ENCODE measurements at regions of chr2 and their contacts with region 1.

Region 1: DNA sequence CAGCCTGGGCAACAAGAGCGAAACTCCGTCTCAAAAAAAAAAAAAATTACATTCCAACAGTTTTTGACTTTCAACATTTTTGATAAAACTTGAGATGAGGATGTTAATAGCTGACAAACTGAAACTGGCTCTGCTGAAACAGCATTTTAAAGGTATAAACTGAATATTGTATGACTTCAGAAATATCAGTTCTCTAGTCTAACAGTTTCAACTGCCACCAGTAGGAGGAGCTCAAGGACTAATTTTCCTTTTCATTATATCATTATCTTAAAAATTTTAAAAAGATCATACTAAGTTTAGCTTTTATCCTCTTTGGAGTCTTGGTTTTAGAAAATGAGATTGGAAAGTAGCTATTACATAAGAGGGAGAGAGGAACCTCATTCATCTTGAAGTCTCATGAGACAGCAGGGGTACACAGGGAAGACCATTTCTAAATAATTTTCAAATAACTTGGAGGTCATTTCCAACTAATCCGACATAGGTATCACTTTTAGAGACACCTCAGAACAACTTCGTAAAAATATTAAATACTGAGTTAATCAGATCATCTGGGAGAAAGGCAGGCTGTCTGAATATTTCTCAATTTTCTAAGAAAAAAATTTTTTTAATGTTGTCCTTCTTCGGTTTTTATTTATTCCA is 37.6 kb upstream of the MCM6 start:
- DNase-seq: peak; percentile 60
- H3K4me3 Mint-ChIP-seq: no peak overlapping the region
- H3K27ac Mint-ChIP-seq: no peak overlapping the region
- H3K4me1 Mint-ChIP-seq: no peaks in the 10 kb centered on the region
- H3K27me3 Mint-ChIP-seq: no peaks in the 10 kb centered on the region
- CTCF ChIP-seq: peak; percentile 76

Region 2: GRCh38 chr2:135931776-135932443 is 18.1 kb after region 1 on chr2:
- CTCF ChIA-PET with region 1: interaction called, 16 read pairs
- POLR2A ChIA-PET with region 1: interaction called, 4 read pairs
- intact Hi-C with region 1: no loop called
- DNase-seq: no peak
- H3K4me3 Mint-ChIP-seq: no peak overlapping the region
- H3K27ac Mint-ChIP-seq: no peak overlapping the region
- H3K4me1 Mint-ChIP-seq: no peaks in the 10 kb centered on the region
- H3K27me3 Mint-ChIP-seq: no peaks in the 10 kb centered on the region
- CTCF ChIP-seq: no peak

Region 3: DNA sequence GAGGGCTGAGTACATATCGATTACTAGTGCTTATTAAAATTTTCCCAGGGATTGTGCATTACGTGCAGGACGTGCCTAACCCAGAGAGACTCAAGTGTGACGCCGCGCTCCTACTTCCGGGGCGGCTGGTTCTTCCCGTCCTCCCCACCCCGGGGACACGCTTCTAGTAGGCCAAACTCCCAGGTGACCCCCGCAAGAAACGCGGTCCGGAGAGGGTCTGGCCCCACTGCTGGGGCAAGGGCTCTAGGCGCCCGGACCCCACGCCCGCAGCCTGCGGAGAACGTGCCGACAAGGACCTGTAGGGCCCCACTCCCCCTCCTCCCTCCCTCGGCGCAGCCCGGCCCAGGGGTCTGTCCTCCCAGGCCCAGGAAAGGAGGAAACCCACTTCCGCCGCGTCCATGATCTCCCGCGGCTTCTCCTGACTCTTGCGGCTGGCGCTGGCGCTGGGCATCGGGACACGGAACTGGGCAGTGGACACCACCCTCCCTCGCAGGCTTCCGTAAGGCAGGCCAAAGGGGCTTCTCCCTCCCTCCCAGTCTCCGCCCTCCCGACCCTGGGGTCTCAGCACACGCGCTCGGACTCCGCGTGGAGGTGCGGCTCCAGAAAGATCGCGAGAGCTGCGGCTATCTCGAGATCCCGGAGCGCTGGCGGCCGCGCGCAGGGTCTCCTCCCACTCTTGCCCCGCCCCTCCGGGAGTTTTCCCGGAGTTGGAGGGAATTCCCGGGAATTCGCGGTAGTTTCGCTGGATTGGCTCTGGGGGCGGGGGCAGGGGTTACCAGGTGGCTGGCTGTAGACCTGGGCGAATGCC is 71.4 kb after region 1 on chr2 and contains the start of gene DARS1:
- CTCF ChIA-PET with region 1: interaction called, 4 read pairs
- POLR2A ChIA-PET with region 1: interaction called, 4 read pairs
- intact Hi-C with region 1: loop called (anchors 2 kb)
- DNase-seq: peak; percentile 91
- H3K4me3 Mint-ChIP-seq: peak within 1 kb of the TSS; percentile 91
- H3K27ac Mint-ChIP-seq: peak within 1 kb of the TSS; percentile 98
- H3K4me1 Mint-ChIP-seq: peaks cover 6% of the 10 kb centered on the region
- H3K27me3 Mint-ChIP-seq: no peaks in the 10 kb centered on the region
- CTCF ChIP-seq: no peak
- total RNA-seq, gene DARS1: 52.8 and 66.5 TPM in 2 replicates

Region 4: DNA sequence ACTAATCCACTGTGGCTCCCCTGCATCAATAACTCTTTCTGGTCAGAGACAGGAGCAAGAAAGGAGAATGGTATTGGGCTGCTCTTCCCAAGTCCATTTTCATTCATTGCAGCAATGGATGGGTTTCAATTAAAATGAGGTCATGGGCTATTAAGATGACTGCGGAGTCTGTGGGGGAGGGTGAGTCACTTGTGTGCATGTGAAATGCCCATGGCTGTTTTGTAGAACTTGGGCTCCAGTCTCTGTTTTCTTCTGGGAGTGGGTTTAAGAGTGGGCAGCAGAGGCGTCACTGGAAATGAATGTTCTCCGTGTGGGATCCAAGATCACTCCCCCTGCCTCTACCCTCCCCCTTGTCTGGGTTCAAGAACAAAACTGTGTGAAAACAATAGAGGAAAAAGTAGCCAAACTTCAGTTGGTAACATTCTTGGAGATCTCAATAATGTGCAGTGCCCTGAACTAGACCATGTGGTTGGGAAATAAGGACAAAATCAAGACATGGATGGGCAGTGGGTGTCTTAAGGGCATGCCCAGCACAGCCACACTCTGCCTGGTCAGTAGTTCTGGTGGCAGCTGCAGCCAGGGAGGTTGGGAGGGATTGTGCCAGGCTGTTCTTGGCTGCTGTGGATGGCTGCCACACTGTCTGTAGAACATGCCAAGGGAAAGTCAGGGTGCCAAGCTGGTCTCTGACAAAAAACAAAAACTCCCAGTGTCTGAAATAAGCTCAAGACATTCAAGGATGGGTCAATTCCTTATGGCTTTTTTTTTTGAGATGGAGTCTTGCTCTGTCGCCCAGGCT is 272.3 kb after region 1 on chr2:
- CTCF ChIA-PET with region 1: no interaction called
- POLR2A ChIA-PET with region 1: no interaction called
- intact Hi-C with region 1: no loop called
- DNase-seq: peak; percentile 9
- H3K4me3 Mint-ChIP-seq: no peak overlapping the region
- H3K27ac Mint-ChIP-seq: no peak overlapping the region
- H3K4me1 Mint-ChIP-seq: no peaks in the 10 kb centered on the region
- H3K27me3 Mint-ChIP-seq: no peaks in the 10 kb centered on the region
- CTCF ChIP-seq: no peak

Region 5: DNA sequence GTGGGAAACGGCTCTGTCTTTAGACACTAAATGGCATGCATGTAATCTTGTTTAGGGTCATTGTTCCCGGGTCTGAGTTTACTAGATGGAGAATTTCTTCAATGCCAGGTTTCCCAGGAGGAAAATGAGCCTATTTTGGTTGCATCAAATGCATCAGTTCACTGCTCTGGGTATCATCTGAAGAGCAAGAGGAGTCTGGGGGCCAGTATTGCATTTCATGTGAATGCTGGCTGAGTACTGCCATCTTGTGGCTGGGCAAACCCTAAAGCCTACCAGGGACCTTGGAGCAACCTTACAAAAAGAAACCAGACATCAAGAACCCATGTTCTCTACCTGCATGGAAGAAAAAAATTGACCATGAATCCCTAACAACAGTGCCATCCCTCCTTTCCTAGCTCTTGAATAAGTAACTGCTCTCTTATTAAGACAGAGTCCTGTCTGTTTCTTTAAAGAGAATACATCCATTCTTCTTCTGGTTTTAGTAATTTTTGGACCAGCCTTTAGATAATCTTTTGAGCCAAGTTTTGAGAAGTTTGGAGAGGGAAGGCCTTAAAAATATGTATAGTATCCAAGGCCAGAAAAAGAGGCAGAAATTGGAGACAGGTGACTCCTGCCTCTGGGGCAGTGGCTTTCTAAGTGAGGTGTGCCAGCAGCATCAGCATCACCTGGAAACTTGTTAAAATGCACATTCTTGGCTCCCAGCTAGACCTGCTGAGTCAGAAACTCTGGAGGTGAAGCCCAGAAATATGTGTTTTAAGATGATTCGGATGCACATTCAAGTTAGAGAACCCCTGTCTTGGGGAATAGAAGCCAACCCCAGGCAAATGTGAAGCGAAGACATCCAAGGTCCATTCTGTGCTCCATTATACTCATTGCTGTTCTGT is 465.1 kb after region 1 on chr2:
- CTCF ChIA-PET with region 1: interaction called, 241 read pairs
- POLR2A ChIA-PET with region 1: interaction called, 4 read pairs
- intact Hi-C with region 1: loop called (anchors 1 kb)
- DNase-seq: peak; percentile 58
- H3K4me3 Mint-ChIP-seq: no peak overlapping the region
- H3K27ac Mint-ChIP-seq: no peak overlapping the region
- H3K4me1 Mint-ChIP-seq: peaks cover 23% of the 10 kb centered on the region
- H3K27me3 Mint-ChIP-seq: no peaks in the 10 kb centered on the region
- CTCF ChIP-seq: peak; percentile 68

Region 6: GRCh38 chr2:136394136-136395060 is 480.6 kb after region 1 on chr2:
- CTCF ChIA-PET with region 1: interaction called, 10 read pairs
- POLR2A ChIA-PET with region 1: no interaction called
- intact Hi-C with region 1: no loop called
- DNase-seq: no peak
- H3K4me3 Mint-ChIP-seq: no peak overlapping the region
- H3K27ac Mint-ChIP-seq: no peak overlapping the region
- H3K4me1 Mint-ChIP-seq: no peaks in the 10 kb centered on the region
- H3K27me3 Mint-ChIP-seq: peaks cover 8% of the 10 kb centered on the region
- CTCF ChIP-seq: no peak

Measured in MCF 10A (cell line).